ENCODE measurements at regions of chr15 and their contacts with region 1.

Region 1: GRCh38 chr15:45205192-45205591 is 17.4 kb upstream of the SHF start:
- DNase-seq: peak; percentile 78
- ATAC-seq: peak; percentile 28
- H3K4me3 Mint-ChIP-seq: no peak overlapping the region
- H3K27ac Mint-ChIP-seq: no peak overlapping the region
- H3K4me1 Mint-ChIP-seq: peaks cover 5% of the 10 kb centered on the region
- H3K27me3 Mint-ChIP-seq: peaks cover 6% of the 10 kb centered on the region

Region 2: DNA sequence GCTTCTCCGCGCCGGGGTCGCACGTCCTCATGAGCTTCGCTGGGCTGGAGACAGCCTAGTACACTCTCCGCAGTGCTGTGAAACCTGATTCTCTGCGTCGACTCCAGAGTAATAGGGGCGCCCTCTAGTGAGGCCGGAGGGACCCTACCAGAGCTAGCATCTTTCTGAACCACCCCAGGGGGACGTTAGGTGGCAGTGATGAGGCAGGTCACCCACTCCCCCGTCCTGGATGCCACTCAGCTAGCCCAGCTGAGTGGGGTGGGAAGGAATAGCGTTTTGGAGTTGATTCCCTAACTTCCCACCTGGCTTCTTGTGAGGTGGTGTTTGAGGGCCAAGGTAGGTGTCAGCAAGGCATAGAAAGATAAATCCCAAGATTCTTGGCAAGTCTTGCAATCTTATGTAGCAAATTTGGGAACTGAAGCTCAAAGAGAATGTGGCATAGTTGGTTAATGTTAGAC is 87.0 kb before region 1 on chr15:
- CTCF ChIA-PET with region 1: interaction called, 12 read pairs
- POLR2A ChIA-PET with region 1: no interaction called
- DNase-seq: peak; percentile 89
- ATAC-seq: peak; percentile 98
- H3K4me3 Mint-ChIP-seq: peak overlapping the region; percentile 60
- H3K27ac Mint-ChIP-seq: no peak overlapping the region
- H3K4me1 Mint-ChIP-seq: peaks cover 22% of the 10 kb centered on the region
- H3K27me3 Mint-ChIP-seq: peaks cover 65% of the 10 kb centered on the region

Region 3: DNA sequence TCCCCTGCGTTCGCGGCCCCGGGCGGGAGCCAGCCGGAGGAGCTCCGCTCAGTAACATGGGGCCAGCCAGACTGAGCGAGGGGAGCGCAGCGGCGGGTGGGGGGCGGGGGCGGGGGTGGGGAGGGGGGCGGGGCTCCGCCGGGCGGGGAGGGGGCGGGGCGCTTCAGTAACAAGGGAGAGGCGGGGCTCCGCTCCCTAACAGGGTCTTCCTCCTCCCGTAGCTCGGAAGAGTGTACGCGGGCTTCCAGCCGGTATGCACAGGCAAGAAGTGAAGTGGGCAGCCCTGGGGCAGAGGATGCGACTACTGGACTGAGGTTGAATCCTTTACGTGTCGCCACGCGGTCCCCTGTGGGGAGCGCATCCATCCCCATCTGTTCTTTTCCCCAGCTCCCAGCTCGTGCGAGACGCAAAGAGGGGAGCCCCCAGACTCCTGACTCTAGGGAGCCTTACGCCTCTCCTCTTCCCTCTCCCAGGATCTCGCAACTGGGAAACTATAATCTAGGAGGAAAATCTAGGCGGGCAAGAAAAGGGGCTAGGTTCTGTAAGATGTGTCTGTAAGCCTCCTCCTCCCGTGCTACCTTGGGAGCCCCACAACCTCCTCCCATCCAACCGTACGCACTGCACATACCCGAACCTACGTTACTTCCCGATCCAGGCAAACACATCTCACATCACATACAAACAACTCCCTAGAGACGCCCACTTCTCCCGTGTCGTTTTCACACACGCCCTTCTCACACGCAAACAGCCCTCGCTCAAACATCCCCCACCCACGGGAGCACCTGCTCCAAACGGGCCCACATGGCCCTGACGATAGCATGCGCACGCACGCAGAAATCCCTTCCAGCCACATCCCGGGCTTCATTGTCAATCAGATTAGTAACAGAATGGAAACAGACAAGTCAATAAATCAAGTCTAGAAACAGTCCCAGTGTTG is 17.0 kb before region 1 on chr15 and contains the start of gene SHF:
- CTCF ChIA-PET with region 1: interaction called, 30 read pairs
- POLR2A ChIA-PET with region 1: interaction called, 33 read pairs
- DNase-seq: peak; percentile 51
- ATAC-seq: peak; percentile 80
- H3K4me3 Mint-ChIP-seq: peak within 1 kb of the TSS; percentile 69
- H3K27ac Mint-ChIP-seq: peak within 1 kb of the TSS; percentile 35
- H3K4me1 Mint-ChIP-seq: peaks cover 11% of the 10 kb centered on the region
- H3K27me3 Mint-ChIP-seq: peaks cover 21% of the 10 kb centered on the region
- total RNA-seq, gene SHF: 0.57 to 1.3 TPM

Region 4: GRCh38 chr15:45253330-45253729 is 48.1 kb after region 1 on chr15:
- CTCF ChIA-PET with region 1: interaction called, 10 read pairs
- POLR2A ChIA-PET with region 1: no interaction called
- DNase-seq: no peak
- ATAC-seq: no peak
- H3K4me3 Mint-ChIP-seq: no peak overlapping the region
- H3K27ac Mint-ChIP-seq: no peak overlapping the region
- H3K4me1 Mint-ChIP-seq: no peaks in the 10 kb centered on the region
- H3K27me3 Mint-ChIP-seq: no peaks in the 10 kb centered on the region

Region 5: GRCh38 chr15:45402162-45402954 is 197.2 kb after region 1 on chr15:
- CTCF ChIA-PET with region 1: interaction called, 82 read pairs
- POLR2A ChIA-PET with region 1: interaction called, 25 read pairs
- DNase-seq: peak; percentile 98
- ATAC-seq: peak; percentile 96
- H3K4me3 Mint-ChIP-seq: peak overlapping the region; percentile 97
- H3K27ac Mint-ChIP-seq: peak overlapping the region; percentile 86
- H3K4me1 Mint-ChIP-seq: peaks cover 29% of the 10 kb centered on the region
- H3K27me3 Mint-ChIP-seq: no peaks in the 10 kb centered on the region

Measured in activated CD8-positive, alpha-beta T cell treated with anti-CD3 and anti-CD28 coated beads, Interleukin-2, amount 10 ng/mL, durations not matched to agents 7 days and 5 days (primary cell).